ENCODE measurements at regions of chr19 and their contacts with region 1.

Region 1: DNA sequence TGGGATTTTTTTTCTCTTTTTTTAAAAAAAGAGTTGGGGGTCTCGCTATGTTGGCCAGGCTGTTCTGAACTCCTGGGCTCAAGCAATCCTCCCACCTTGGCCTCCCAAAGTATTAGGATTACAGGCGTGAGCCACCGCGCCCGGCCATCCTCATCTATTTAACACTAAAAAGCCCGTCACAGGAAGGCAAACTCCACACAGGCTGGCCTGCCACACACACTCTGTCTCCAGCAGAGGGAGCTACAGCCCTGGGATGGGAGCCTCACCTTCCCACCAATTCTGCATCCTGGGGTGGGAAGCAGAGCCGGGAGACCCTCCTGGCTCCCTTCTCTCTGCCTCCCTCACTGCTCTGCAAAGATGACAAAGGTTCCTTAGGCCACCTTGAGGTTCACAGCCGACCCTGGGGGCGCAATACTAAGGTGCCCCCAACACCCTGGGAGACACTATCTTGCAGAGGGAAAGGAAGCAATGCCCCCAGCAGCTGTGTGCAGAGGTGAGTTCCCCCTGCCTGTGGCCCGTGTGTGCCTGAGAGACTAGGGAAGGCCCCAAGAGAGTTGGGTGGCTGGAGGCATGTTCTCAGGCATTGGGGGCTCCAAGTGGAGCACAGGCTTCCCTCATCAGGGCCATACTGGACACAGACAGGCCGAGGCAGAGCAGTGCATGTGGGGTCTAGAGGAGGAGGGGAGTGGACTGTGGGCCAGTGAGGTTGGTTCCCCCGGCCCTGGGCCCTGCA is 27.4 kb upstream of the TIMM44 start:
- DNase-seq: peak; percentile 34 to 85
- H3K4me3 ChIP-seq: no peak overlapping the region
- H3K27ac ChIP-seq: no peak overlapping the region; the same call in 1 of the 2 replicates
- H3K4me1 ChIP-seq: peaks cover 0 to 10% (median 9%) of the 10 kb centered on the region in 4 experiments; a peak in 6 of 7 replicates
- H3K27me3 ChIP-seq: no peaks in the 10 kb centered on the region
- CTCF ChIP-seq: peak; percentile 86 to 98 (median 96)
- EP300 ChIP-seq: no peak
- POLR2A ChIP-seq: no peak
- RAD21 ChIP-seq: peak; percentile 86

Region 2: GRCh38 chr19:7943444-7944176 is 27.3 kb before region 1 on chr19 and contains the start of gene TIMM44:
- CTCF ChIA-PET with region 1: interaction called, 36 read pairs
- POLR2A ChIA-PET with region 1: interaction called, 55 read pairs
- DNase-seq: peak; percentile 98
- H3K4me3 ChIP-seq: peak within 1 kb of the TSS; percentile 90 to 99 (median 97)
- H3K27ac ChIP-seq: peak within 1 kb of the TSS; percentile 94
- H3K4me1 ChIP-seq: peaks cover 0 to 3% (median 0%) of the 10 kb centered on the region in 4 experiments; a peak in 1 of 7 replicates
- H3K27me3 ChIP-seq: no peaks in the 10 kb centered on the region
- CTCF ChIP-seq: no peak
- EP300 ChIP-seq: no peak
- POLR2A ChIP-seq: peak; percentile 97 to 99
- RAD21 ChIP-seq: no peak
- total RNA-seq, gene TIMM44: 123 and 131 TPM in 2 replicates

Region 3: GRCh38 chr19:7953060-7953459 is 17.8 kb before region 1 on chr19:
- CTCF ChIA-PET with region 1: interaction called, 15 read pairs
- POLR2A ChIA-PET with region 1: interaction called, 7 read pairs
- DNase-seq: no peak
- H3K4me3 ChIP-seq: no peak overlapping the region
- H3K27ac ChIP-seq: no peak overlapping the region
- H3K4me1 ChIP-seq: peaks cover 0 to 4% (median 0%) of the 10 kb centered on the region in 4 experiments; a peak in 1 of 7 replicates
- H3K27me3 ChIP-seq: no peaks in the 10 kb centered on the region; a peak in 1 of 7 replicates
- CTCF ChIP-seq: no peak
- EP300 ChIP-seq: no peak
- POLR2A ChIP-seq: no peak
- RAD21 ChIP-seq: no peak

Region 4: DNA sequence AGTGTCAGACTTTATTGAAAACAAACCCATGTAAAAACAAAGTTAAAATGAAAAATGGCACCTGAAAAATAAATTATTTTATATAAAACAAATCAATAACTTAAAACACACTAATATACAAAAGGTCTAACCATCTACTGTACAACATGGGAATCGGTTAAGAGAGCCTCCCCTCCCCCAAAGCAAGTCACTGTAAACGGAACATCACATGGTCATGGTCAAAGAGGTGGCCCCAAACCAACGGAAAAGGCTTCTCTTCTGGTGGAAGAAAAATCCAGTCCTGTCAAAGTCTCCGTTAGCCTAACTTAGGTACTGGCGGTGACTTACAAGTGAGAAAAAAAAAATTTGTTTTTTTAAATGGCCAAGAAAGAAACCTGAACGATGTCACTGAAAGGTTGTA is 11.7 kb before region 1 on chr19:
- CTCF ChIA-PET with region 1: interaction called, 12 read pairs
- POLR2A ChIA-PET with region 1: interaction called, 8 read pairs
- DNase-seq: no peak
- H3K4me3 ChIP-seq: no peak overlapping the region
- H3K27ac ChIP-seq: no peak overlapping the region
- H3K4me1 ChIP-seq: no peaks in the 10 kb centered on the region
- H3K27me3 ChIP-seq: no peaks in the 10 kb centered on the region; a peak in 1 of 7 replicates
- CTCF ChIP-seq: no peak
- EP300 ChIP-seq: no peak
- POLR2A ChIP-seq: no peak
- RAD21 ChIP-seq: no peak

Region 5: GRCh38 chr19:7994114-7994513 is 23.2 kb after region 1 on chr19:
- CTCF ChIA-PET with region 1: interaction called, 12 read pairs
- POLR2A ChIA-PET with region 1: interaction called, 9 read pairs
- DNase-seq: no peak
- H3K4me3 ChIP-seq: no peak overlapping the region
- H3K27ac ChIP-seq: no peak overlapping the region
- H3K4me1 ChIP-seq: peaks cover 0 to 6% (median 1%) of the 10 kb centered on the region in 4 experiments; a peak in 4 of 7 replicates
- H3K27me3 ChIP-seq: no peaks in the 10 kb centered on the region
- CTCF ChIP-seq: peak in 2 of 3 experiments; percentile 8 to 29; a peak in 2 of 4 replicates
- EP300 ChIP-seq: no peak
- POLR2A ChIP-seq: no peak
- RAD21 ChIP-seq: peak; percentile 11 to 35; a peak in 1 of 4 replicates

Region 6: DNA sequence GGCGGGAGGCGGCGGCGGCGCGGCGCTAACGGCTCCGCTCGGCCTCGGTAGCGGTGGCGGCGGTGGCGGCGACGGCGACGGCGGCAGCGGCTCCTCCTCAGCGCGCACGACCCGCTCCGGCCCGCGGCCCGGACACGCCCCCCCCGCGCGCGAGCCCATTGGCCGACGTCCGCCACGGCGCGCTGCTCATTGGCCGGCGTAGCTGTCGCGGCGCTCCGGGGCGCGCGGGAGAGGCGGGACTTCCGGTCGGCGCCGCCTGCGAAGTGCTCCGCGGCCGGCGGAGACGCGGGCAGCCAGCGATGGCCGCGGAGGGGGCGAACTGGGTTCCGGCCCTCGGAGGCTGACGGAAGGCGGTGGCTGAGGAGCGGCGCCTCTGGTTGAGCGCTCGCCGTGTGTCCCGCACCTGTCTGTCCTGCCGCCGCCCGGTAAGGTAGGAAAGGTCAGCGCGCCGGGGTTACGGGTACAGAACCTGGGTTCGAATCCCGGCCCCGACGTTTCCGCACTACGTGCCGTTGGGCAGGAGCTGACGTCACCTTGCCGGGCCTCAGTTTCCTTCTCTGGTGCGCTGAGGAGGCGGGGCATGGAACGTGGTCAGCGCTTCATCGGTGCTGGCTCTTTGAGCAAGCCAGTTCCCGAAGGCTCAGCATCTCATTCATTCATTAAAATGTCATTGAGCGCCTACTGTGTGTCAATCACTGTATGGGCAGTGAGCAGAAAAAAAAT is 34.8 kb after region 1 on chr19 and contains the start of gene ELAVL1:
- CTCF ChIA-PET with region 1: interaction called, 24 read pairs
- POLR2A ChIA-PET with region 1: interaction called, 4 read pairs
- DNase-seq: peak; percentile 53 to 94
- H3K4me3 ChIP-seq: peak within 1 kb of the TSS; percentile 63 to 89 (median 85)
- H3K27ac ChIP-seq: peak within 1 kb of the TSS; percentile 93; the same call in 1 of the 2 replicates
- H3K4me1 ChIP-seq: peaks cover 6 to 13% (median 9%) of the 10 kb centered on the region in 4 experiments
- H3K27me3 ChIP-seq: no peaks in the 10 kb centered on the region
- CTCF ChIP-seq: no peak
- EP300 ChIP-seq: no peak
- POLR2A ChIP-seq: peak; percentile 80 to 87
- RAD21 ChIP-seq: no peak
- total RNA-seq, gene ELAVL1: 163 and 167 TPM in 2 replicates

Region 7: GRCh38 chr19:8036434-8037099 is 65.7 kb after region 1 on chr19:
- CTCF ChIA-PET with region 1: interaction called, 10 read pairs
- POLR2A ChIA-PET with region 1: no interaction called
- DNase-seq: no peak
- H3K4me3 ChIP-seq: no peak overlapping the region
- H3K27ac ChIP-seq: no peak overlapping the region; the same call in 1 of the 2 replicates
- H3K4me1 ChIP-seq: peaks cover 0 to 11% (median 6%) of the 10 kb centered on the region in 4 experiments; a peak in 3 of 7 replicates
- H3K27me3 ChIP-seq: no peaks in the 10 kb centered on the region; a peak in 1 of 7 replicates
- CTCF ChIP-seq: no peak
- EP300 ChIP-seq: no peak
- POLR2A ChIP-seq: no peak
- RAD21 ChIP-seq: no peak